ENCODE measurements at regions of chr5 and their contacts with region 1.

Region 1: DNA sequence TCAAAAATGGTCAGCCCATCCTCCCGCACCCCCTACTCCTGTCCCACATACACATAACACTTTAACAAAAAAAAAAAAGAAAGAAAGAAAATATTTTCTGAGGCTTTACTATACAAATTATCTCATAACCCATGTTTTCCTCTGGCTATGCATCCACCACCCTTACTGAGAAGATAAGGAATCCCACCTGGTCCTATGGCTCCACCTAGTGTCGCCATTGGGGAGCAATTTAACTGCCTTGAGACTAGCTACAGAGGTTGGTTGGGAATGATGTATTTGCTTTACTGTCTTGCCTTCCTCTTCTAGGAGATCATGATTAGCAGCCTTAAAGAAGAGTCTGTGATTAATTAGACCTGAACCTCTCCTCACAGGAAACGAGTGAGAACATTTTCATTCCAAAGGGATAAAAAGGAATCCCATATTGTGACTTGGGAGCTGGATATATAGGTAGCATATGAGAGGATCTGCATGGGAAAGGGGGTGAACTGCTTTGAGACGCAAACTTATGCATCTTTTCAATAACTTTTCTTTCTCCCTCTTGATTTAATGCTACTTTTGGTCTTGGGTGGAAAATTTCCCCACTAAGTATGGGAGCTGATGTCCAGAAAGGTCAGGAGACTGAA is 77.7 kb upstream of the SELENOP start:
- DNase-seq: peak in 4 of 5 donors; percentile 48 to 54 (median 51)
- H3K4me3 ChIP-seq: no peak overlapping the region
- H3K4me3 Mint-ChIP-seq: no peak overlapping the region
- H3K27ac ChIP-seq: no peak overlapping the region
- H3K27ac Mint-ChIP-seq: no peak overlapping the region
- H3K4me1 ChIP-seq: no peaks in the 10 kb centered on the region
- H3K4me1 Mint-ChIP-seq: no peaks in the 10 kb centered on the region
- H3K27me3 ChIP-seq: no peaks in the 10 kb centered on the region
- H3K27me3 Mint-ChIP-seq: peaks cover 7 to 8% of the 10 kb centered on the region in 2 donors

Region 2: GRCh38 chr5:42057254-42057690 is 832.1 kb before region 1 on chr5:
- CTCF ChIA-PET with region 1: interaction called, 16 read pairs
- POLR2A ChIA-PET with region 1: no interaction called
- intact Hi-C with region 1: loop called (anchors 5 kb)
- DNase-seq: peak; percentile 51 to 57 (median 54)
- H3K4me3 ChIP-seq: no peak overlapping the region
- H3K4me3 Mint-ChIP-seq: no peak overlapping the region
- H3K27ac ChIP-seq: no peak overlapping the region
- H3K27ac Mint-ChIP-seq: no peak overlapping the region
- H3K4me1 ChIP-seq: no peaks in the 10 kb centered on the region
- H3K4me1 Mint-ChIP-seq: no peaks in the 10 kb centered on the region
- H3K27me3 ChIP-seq: no peaks in the 10 kb centered on the region
- H3K27me3 Mint-ChIP-seq: peaks cover 4 to 9% of the 10 kb centered on the region in 2 donors

Region 3: DNA sequence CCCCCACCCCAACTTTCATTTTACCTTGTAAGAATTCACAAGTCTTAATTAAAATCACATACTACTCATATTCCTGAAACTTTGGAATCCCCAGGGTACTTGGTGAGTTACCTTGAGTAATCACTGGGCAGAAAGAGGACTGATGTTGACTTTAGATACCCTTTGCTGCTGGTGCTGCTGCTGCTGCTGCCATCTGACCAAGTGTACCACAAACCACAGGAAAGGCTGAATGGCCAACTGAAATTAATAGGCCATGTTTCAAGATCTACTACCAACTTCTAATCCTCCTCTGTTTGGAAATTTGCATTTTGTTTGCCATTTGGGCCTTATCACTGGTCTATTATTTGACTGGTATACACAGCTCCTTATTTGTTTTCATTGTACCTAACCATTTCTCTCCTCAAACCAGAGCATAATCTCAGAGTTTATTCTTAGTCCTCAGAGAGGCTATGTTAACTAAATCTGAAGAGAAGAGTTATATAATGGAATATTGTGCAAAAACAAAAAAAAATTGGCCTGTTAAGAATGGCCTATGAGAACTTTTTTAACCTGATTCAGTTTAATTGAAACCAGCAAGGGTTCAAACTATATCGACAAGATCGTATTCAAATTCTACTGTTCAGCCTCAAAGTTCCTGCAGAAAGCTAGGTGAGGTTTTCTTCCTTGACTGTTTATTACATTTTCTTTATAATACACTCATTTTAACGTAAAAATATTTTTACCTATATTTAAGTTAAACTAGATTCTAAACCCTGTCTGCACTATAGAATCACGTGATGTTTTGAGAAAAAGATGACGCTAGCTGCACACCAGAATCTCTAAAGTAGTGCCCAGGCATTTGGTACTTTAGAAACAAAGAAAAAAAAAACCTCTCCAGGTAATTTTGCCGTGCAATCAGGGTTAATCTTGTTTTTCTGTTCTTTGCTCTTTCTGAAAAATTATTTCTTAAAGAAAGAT is 90.9 kb before region 1 on chr5:
- CTCF ChIA-PET with region 1: no interaction called
- POLR2A ChIA-PET with region 1: no interaction called
- intact Hi-C with region 1: no loop called
- DNase-seq: no peak
- H3K4me3 ChIP-seq: no peak overlapping the region
- H3K4me3 Mint-ChIP-seq: no peak overlapping the region
- H3K27ac ChIP-seq: no peak overlapping the region
- H3K27ac Mint-ChIP-seq: peak overlapping the region in 1 of 7 donors; percentile 67
- H3K4me1 ChIP-seq: no peaks in the 10 kb centered on the region
- H3K4me1 Mint-ChIP-seq: no peaks in the 10 kb centered on the region
- H3K27me3 ChIP-seq: no peaks in the 10 kb centered on the region
- H3K27me3 Mint-ChIP-seq: no peaks in the 10 kb centered on the region

Region 4: GRCh38 chr5:42876375-42876844 is 13.0 kb before region 1 on chr5:
- CTCF ChIA-PET with region 1: interaction called, 10 read pairs
- POLR2A ChIA-PET with region 1: no interaction called
- intact Hi-C with region 1: no loop called
- DNase-seq: no peak
- H3K4me3 ChIP-seq: no peak overlapping the region
- H3K4me3 Mint-ChIP-seq: peak overlapping the region in 4 of 8 donors; percentile 13 to 37 (median 34)
- H3K27ac ChIP-seq: no peak overlapping the region
- H3K27ac Mint-ChIP-seq: peak overlapping the region in 1 of 7 donors; percentile 42
- H3K4me1 ChIP-seq: peaks cover 8% of the 10 kb centered on the region
- H3K4me1 Mint-ChIP-seq: peaks cover 0 to 12% (median 6%) of the 10 kb centered on the region in 4 donors
- H3K27me3 ChIP-seq: no peaks in the 10 kb centered on the region
- H3K27me3 Mint-ChIP-seq: peaks cover 3 to 6% of the 10 kb centered on the region in 2 donors

Measured in CD4-positive, alpha-beta memory T cell (primary cell).